ENCODE measurements at regions of chr10 and their contacts with region 1.

Region 1: GRCh38 chr10:32943854-32944661 is 14.0 kb downstream of the ITGB1 start:
- DNase-seq: peak; percentile 91
- ATAC-seq: peak; percentile 96
- H3K4me3 ChIP-seq: peak overlapping the region; percentile 31 to 68 (median 48); a peak in 5 of 6 replicates
- H3K27ac ChIP-seq: peak overlapping the region; percentile 67
- H3K4me1 ChIP-seq: peaks cover 98% of the 10 kb centered on the region
- H3K27me3 ChIP-seq: no peaks in the 10 kb centered on the region
- CTCF ChIP-seq: no peak
- EP300 ChIP-seq: no peak
- POLR2A ChIP-seq: peak; percentile 31 to 81; a peak in 3 of 4 replicates
- RAD21 ChIP-seq: 0 out of 2 replicates have a peak, but pooled peaks have one; percentile 32

Region 2: GRCh38 chr10:32980558-32981468 is 36.8 kb after region 1 on chr10:
- CTCF ChIA-PET with region 1: no interaction called
- POLR2A ChIA-PET with region 1: interaction called, 17 read pairs
- in situ Hi-C with region 1: no loop called
- intact Hi-C with region 1: loop called (anchors 5 kb)
- DNase-seq: peak; percentile 87
- ATAC-seq: peak; percentile 92
- H3K4me3 ChIP-seq: peak overlapping the region; percentile 61 to 79 (median 67)
- H3K27ac ChIP-seq: peak overlapping the region; percentile 70
- H3K4me1 ChIP-seq: peaks cover 49% of the 10 kb centered on the region
- H3K27me3 ChIP-seq: no peaks in the 10 kb centered on the region; a peak in 1 of 5 replicates
- CTCF ChIP-seq: 0 out of 2 replicates have a peak, but pooled peaks have one; percentile 2
- EP300 ChIP-seq: no peak; a peak in 1 of 4 replicates
- POLR2A ChIP-seq: peak; percentile 72
- RAD21 ChIP-seq: peak; percentile 51